ENCODE measurements at regions of chr4 and their contacts with region 1.

Region 1: DNA sequence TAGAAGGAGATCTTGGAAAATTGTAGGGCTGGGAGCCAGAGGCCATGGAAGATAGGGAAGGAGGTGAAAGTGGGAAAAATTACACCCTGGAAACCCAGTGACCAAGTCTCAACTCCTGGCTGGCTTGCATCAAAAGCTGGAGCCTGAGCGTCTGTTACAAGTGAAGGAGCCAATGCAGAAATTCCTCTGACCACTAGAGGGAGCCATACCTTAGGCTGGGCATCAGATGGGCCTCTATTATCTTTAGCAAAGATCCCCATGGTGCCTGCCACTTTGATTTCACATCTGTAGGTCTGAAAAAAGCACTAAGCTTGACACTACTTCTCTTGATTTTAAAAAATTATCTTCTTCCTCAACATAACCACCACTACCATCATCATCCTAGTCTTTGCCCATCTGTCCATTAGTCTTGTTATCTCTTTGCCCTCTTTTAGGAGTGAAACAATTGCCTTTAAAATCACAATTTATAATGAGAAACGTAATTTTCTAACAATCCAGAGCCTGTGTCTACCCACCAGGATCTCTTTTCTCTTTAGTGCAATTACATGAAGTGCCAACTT is 62.9 kb downstream of the ANAPC4 start:
- DNase-seq: peak; percentile 33
- H3K4me3 ChIP-seq: no peak overlapping the region
- H3K27ac ChIP-seq: no peak overlapping the region
- H3K27me3 ChIP-seq: peaks cover 2% of the 10 kb centered on the region
- CTCF ChIP-seq: peak; percentile 95

Region 2: DNA sequence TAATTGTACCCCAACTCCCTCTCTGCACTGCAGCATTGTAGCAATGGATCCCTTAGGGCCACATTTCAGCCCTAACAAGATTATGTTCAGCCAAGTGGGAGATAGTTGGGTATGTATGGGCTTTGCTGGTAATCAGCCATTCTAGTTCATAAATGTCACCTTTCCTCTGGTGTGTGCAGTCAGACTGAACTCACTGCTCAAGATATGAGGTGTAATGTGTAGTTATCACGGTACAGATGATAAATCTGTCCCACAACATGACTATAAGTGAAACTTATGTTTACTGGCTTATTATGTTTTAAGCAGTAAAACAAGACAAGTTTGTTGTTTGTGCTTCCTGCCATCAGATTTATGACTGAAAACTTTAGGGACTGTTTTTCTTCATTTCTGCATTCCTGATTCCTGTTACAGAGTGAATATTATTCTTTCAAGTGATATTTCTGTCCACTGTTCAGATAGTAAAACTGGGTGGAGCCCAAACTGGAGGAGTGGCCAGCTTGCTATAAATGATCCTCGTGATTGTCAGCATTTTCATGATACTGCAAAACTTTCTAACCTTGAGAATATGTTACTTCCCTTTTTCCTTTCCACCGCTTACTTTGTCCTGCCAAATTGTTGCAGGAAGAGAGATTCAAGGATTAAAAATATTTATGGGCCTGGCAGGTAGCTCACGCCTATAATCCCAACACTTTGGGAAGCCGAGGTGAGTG is 18.0 kb before region 1 on chr4:
- CTCF ChIA-PET with region 1: interaction called, 20 read pairs
- POLR2A ChIA-PET with region 1: no interaction called
- DNase-seq: no peak
- H3K4me3 ChIP-seq: no peak overlapping the region
- H3K27ac ChIP-seq: no peak overlapping the region
- H3K27me3 ChIP-seq: no peaks in the 10 kb centered on the region
- CTCF ChIP-seq: no peak

Region 3: DNA sequence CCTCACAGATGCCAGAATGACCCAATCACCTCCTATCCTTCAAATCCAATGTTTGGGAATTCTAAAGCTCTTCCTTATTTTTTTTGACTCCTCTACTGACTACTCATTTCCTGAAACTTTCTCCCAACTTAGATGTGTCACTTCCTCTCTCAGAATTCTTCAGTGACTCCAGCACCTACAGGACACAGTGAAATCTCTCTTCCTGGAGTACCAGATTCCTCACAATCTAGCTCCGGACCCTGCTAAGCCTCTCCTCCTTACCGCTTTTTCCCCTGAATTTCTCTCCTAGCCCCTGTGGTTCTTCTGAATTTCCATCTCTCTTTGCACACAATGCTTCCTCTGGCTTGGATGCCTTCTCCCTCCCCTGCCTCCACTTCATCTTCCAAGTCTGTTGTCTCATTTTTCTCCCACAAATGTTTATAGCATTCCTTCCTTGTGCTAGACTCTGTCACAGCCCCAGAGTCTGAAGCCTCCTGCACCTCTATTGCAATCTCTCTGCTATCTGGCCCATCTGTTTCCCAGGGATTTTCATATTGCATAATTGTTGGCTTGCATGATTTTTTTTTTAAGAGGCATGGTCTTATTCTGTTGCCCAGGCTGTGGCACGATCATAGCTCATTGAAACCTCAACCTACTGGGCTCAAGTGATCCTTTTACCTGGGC is 17.2 kb after region 1 on chr4:
- CTCF ChIA-PET with region 1: interaction called, 10 read pairs
- POLR2A ChIA-PET with region 1: no interaction called
- DNase-seq: no peak
- H3K4me3 ChIP-seq: no peak overlapping the region
- H3K27ac ChIP-seq: no peak overlapping the region
- H3K27me3 ChIP-seq: peaks cover 2% of the 10 kb centered on the region
- CTCF ChIP-seq: no peak

Region 4: DNA sequence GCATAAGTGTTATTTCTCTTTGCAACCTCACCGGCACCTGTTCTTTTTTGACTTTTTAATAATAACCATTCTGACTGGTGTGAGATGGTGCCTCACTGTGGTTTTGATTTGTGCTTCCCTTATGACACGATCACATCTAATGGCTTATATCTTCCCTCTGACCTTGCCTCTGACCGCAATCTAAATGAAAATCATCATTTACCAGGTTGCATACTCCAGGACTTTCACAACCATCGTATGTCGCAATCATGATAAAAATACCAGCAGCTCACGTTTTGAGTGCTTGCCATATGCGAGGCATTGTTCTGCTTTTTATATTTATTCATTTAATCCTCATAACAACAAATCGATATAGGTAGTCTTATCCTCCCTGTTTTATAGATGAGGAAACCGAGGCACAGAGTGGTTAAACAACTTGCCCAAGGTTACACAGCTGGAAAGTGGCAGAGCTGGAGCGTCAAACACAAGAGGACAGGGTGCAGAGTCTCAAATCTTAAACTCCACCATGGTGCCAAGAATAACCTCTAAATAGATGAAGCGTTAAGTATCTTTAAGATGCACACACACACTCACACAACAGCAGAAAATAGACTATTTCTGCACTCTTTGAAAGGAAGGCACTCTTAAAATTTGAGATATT is 320.6 kb after region 1 on chr4:
- CTCF ChIA-PET with region 1: interaction called, 302 read pairs
- POLR2A ChIA-PET with region 1: no interaction called
- DNase-seq: no peak
- H3K4me3 ChIP-seq: no peak overlapping the region
- H3K27ac ChIP-seq: no peak overlapping the region
- H3K27me3 ChIP-seq: no peaks in the 10 kb centered on the region
- CTCF ChIP-seq: no peak

Region 5: GRCh38 chr4:25928379-25929297 is 488.6 kb after region 1 on chr4:
- CTCF ChIA-PET with region 1: interaction called, 11 read pairs
- POLR2A ChIA-PET with region 1: no interaction called
- DNase-seq: no peak
- H3K4me3 ChIP-seq: no peak overlapping the region
- H3K27ac ChIP-seq: no peak overlapping the region
- H3K27me3 ChIP-seq: no peaks in the 10 kb centered on the region
- CTCF ChIP-seq: no peak